Activated CD4-positive, alpha-beta T cell treated with anti-CD3 and anti-CD28 coated beads, Interleukin-2, amount 10 ng/mL, durations not matched to agents 24 days and 14 days (primary cell): ENCODE measurements at regions of chr3 and their contacts with region 1.

Region 1: DNA sequence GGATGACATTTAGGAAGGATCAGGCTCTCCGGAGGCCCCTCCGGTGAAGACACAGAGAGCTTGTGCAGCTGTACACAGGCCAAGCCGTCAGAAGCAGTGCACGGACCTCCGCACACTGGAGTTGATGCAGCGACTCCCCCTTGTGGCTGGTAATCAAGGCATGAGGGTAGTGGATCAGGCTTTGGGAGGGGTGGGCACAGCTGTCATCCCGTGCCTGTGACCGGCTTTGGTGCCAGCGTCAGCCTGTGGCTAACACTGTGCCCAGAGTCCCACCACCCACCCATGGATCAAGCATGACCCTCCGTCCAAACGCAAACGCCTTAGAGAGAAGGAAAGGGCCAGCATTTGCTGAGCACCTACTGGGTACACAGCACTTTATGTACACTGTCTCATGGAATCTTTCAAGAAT is 8.2 kb upstream of the GRIP2 start:
- DNase-seq: peak; percentile 78
- H3K4me3 Mint-ChIP-seq: no peak overlapping the region
- H3K27ac Mint-ChIP-seq: no peak overlapping the region
- H3K4me1 Mint-ChIP-seq: no peaks in the 10 kb centered on the region
- H3K27me3 Mint-ChIP-seq: peaks cover 22% of the 10 kb centered on the region

Region 2: DNA sequence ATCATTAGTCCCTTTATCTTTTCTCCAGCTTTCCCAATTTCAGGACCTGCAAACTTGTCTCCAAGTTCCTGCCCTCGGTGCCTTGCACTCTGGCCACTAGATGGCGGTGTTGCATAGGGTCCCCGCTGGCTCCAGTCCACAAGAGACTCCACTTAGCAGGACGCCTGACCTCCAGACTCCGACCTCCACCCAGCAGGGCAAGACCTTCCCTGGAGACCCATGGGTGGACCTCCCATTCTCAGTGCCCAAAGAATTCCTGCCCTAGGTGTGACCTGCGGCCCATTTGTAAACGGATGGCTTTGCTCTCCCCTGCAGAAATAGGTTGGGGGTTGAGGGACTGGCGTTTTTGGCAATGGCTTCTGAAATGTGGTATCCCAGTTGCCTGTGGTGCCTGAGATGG is 287.1 kb before region 1 on chr3:
- intact Hi-C with region 1: loop called (anchors 2 kb)
- DNase-seq: peak; percentile 92
- H3K4me3 Mint-ChIP-seq: no peak overlapping the region
- H3K27ac Mint-ChIP-seq: no peak overlapping the region
- H3K4me1 Mint-ChIP-seq: no peaks in the 10 kb centered on the region
- H3K27me3 Mint-ChIP-seq: peaks cover 7% of the 10 kb centered on the region

Region 3: DNA sequence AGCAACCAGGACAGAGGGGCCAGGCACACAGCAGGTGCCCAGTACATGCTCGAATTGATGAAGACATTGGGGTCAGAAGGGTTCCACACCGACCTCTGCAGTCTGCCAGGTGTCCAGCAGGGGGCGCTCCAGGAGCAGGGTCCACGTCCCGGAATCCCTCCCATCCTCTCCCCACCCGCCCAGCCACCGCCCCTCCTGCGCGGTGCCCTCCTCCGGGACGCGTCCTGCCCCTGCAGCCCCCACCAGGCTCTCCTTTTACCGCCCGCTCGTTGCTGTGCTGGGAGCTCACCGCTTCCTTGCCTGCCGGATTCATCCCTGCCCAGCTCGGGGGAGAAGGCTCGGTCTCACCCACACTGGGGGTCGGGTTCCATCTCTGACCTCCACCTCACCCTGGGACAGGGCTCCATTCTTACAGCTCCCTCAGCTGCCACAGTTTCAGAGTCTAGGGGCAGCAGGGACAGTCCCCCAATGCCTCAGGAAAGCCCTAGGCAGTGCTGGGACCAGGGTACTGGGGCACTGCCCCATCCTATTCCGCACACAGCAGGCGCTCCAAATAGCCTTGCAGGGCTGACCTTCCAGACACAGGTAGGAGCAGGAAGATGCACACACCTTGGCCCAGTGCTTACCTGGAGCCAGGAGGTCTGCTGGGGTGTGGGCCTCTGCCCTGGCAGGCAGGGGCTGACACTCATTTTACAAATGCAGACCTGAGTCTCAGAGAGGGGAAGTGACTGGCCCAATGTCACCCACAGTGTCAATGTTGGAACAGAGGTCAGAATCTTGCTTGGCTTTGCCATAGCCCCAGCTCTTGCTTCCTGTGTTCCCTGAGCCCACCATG is 39.1 kb before region 1 on chr3:
- intact Hi-C with region 1: loop called (anchors 5 kb)
- DNase-seq: peak; percentile 91
- H3K4me3 Mint-ChIP-seq: no peak overlapping the region
- H3K27ac Mint-ChIP-seq: no peak overlapping the region
- H3K4me1 Mint-ChIP-seq: peaks cover 3% of the 10 kb centered on the region
- H3K27me3 Mint-ChIP-seq: peaks cover 2% of the 10 kb centered on the region

Region 4: DNA sequence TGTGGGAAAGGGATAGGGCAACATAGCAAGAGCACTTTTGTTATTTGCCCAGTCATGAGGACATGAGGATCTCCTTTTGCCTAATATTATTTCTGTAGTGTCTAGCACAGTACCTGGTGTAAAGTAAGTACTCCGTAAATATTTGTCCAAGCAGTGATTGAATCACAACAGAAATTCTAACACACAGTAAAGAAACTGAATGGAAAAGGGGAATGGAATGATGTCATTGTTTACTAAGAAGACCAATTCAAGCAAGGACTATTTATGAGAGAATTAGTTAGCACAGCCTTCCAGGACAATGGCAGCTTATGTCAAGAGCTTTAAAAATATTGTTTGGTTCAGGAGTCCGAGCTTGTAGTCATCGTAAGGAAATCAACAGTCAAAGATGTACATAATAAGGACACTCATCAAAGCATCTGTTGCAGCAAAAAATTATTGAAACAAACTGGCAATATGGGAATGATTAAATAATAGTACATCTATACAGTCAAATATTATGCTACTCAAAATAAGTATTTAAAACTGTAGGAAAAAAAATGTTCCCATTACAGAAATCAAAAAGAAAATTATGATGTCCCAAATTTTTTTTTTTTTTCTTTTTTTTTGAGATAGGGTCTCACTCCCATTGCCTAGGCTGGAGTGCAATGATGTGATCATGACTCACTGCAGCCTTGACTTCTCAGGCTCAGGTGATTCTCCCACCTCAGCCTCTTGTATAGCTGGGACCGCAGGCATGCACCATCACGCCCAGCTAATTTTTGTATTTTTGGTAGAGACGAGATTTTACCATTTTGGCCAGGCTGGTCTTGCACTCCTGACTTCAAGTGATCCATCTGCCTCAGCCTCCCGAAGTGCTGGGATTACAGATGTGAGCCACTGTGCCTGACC is 675.6 kb after region 1 on chr3:
- intact Hi-C with region 1: no loop called
- DNase-seq: no peak
- H3K4me3 Mint-ChIP-seq: no peak overlapping the region
- H3K27ac Mint-ChIP-seq: no peak overlapping the region
- H3K4me1 Mint-ChIP-seq: no peaks in the 10 kb centered on the region
- H3K27me3 Mint-ChIP-seq: no peaks in the 10 kb centered on the region